ENCODE measurements at regions of chr12 and their contacts with region 1.

Region 1: DNA sequence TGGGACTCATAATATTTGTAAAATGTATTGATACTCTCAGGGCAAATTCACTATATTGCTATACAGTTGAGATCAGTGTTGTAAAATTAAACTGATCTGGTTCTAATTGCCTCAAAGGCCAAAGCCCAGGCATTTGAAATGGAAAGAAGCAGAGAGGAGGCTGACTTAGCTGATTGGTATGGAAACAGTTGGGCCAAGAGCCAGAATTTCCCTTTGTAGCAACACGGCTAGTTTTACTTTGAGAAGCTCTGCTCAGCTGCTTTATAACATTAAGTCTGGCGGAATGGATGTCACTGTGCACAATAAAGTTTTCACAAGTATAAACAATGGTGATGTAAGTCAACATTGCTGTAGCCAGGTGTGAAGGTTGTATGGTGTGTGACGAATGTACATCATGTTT is 186.4 kb downstream of the MSRB3 start:
- DNase-seq: no peak
- H3K4me3 ChIP-seq: no peak overlapping the region
- H3K27ac ChIP-seq: no peak overlapping the region
- H3K4me1 ChIP-seq: peaks cover 0 to 10% (median 3%) of the 10 kb centered on the region in 4 donors
- H3K27me3 ChIP-seq: no peaks in the 10 kb centered on the region
- CTCF ChIP-seq: no peak

Region 2: DNA sequence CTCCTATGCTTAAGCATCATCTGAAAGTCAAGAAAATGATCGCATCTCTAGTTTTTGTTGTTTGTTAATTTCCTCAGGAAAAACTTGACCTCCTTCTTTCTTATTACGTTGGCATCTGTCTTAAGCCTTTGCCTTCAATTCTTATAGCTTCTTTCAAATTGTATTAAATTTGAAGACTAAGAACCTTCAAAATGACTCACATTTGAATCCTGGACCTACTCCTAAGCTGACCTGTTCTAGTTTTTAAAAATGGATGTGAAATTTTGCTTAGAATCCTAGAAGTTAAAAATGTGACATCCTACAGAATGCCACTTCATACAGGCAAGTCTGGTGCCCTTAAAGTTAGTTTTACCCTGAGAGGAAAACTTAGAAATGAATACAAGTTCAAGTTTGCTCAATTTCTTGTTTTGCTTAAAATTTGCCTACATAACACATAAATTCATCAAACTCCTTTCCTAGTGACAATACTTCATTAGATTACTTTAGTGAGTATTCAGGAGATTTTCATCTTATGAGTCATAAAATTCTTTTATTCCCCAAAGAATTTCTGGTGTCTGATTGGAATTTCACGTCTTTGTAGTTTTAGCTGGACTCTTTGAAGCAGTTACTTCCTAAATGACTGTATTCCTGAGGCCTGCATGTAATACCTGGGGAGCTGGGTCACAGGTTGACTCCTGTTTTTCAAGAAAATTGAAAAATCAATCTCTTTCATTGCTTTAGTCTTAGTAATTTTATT is 34.2 kb before region 1 on chr12:
- intact Hi-C with region 1: loop called (anchors 1 kb)
- DNase-seq: no peak
- H3K4me3 ChIP-seq: no peak overlapping the region
- H3K27ac ChIP-seq: no peak overlapping the region
- H3K4me1 ChIP-seq: peaks cover 0 to 30% (median 2%) of the 10 kb centered on the region in 4 donors
- H3K27me3 ChIP-seq: no peaks in the 10 kb centered on the region
- CTCF ChIP-seq: no peak

Measured in tibial artery (tissue), 4 donors.